Aorta (tissue), 5 donors: ENCODE measurements at regions of chr11 and their contacts with region 1.

Region 1: GRCh38 chr11:43825217-43825816 is 55.3 kb upstream of the ALKBH3 start:
- DNase-seq: no peak
- ATAC-seq: no peak
- H3K4me3 ChIP-seq: no peak overlapping the region
- H3K27ac ChIP-seq: no peak overlapping the region
- H3K4me1 ChIP-seq: no peaks in the 10 kb centered on the region
- H3K27me3 ChIP-seq: no peaks in the 10 kb centered on the region

Region 2: GRCh38 chr11:43852057-43852636 is 26.8 kb after region 1 on chr11:
- intact Hi-C with region 1: loop called in 1 of 2 experiments (anchors 2 kb)
- DNase-seq: peak in 1 of 2 donors; percentile 55
- ATAC-seq: no peak
- H3K4me3 ChIP-seq: no peak overlapping the region
- H3K27ac ChIP-seq: no peak overlapping the region
- H3K4me1 ChIP-seq: no peaks in the 10 kb centered on the region
- H3K27me3 ChIP-seq: no peaks in the 10 kb centered on the region